Esophagus muscularis mucosa (tissue), 4 donors: ENCODE measurements at regions of chr16 and their contacts with region 1.

Region 1: DNA sequence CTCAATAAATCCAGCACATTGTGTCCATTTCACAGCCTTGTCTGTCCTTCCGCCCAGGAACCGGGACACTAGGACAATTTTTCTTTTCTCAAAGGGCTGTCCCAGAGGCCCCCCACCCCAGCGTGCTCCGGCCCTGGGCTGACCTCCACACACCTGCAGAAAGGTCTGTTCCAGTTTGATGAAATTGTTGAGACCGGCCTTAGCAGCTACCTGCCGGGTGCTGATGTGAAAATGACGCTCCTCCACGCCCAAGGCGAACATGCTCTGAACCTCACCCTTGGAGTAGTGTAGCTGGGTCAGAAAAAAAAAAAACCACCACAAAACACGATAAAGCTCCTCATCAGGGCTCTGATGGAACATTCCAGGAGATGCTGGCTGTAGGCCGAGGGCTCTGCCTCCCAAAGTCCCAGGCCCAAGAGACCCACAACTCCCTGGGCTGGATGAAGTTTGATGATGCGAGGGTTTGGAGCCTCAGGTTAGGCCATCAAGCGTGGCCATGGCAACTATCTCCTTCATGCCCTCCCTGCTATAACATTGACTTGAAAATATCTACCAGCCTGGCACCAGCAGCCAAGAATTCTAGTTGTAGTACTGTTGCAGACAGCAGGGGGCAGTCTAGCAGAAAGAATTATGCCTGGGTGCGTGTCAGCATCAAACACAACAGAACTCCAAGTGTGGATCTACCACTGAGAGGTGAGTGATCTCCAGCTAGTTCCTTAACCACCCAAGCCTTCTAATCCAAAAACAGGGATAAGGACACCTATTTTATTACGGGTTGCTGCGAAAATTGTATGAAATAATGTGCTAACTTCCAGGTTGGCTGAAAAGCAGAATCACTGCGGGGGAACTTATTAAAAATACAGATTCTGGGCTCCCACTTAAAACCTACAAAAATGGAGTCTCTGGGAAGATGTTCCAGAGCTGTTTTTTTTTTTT is 62.1 kb downstream of the RMI2 start:
- DNase-seq: no peak
- H3K4me3 ChIP-seq: no peak overlapping the region
- H3K27ac ChIP-seq: no peak overlapping the region
- H3K4me1 ChIP-seq: no peaks in the 10 kb centered on the region
- H3K27me3 ChIP-seq: no peaks in the 10 kb centered on the region
- CTCF ChIP-seq: peak; percentile 53 to 74 (median 59)
- EP300 ChIP-seq: no peak
- POLR2A ChIP-seq: no peak

Region 2: DNA sequence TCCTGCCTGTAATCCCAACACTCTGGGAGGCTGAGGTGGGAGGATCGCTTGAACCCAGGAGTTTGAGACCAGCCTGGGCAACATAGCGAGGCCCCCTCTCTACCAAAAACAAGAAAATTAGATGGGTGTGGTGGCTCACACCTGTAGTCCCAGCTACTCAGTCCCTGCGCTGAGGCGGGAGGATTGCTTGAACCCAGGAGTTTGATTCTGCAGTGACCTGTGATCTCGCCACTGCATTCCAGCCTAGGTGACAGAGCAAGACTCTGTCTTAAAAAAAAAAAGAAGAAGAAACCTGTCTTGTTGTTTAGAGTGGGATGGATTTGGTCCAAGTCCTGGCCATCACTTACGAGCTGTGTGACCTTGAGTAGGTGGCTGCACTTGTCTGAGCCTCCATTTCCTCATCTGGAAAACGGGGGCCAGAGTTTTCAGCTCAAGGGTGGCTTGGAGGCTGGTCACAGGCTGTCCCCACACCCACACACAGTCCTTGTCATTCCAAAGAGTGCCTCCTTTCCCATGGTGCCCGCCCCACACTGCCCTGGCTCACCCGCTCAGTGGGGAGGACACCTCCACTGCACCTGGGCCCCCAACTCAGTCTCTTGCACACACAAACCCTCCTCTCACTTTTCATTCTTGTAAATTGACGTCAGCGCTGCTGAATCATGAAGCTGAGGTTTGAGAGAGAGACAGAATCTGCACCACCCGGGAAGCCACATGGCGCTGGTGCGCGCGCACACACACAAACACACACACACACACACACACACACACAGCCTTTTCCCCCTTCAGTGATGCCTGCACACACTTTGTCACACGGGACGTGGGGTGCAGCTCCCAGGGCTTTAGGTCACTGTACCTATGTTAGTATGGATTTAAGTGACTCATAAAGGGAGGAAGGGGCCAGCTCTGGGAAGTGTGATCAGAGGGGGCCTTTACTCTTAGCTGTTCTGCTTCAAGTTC is 155.5 kb before region 1 on chr16:
- intact Hi-C with region 1: no loop called
- DNase-seq: no peak
- H3K4me3 ChIP-seq: no peak overlapping the region
- H3K27ac ChIP-seq: no peak overlapping the region
- H3K4me1 ChIP-seq: peaks cover 17 to 32% (median 28%) of the 10 kb centered on the region in 4 donors
- H3K27me3 ChIP-seq: peaks cover 0 to 4% (median 0%) of the 10 kb centered on the region in 4 donors
- CTCF ChIP-seq: no peak
- EP300 ChIP-seq: no peak
- POLR2A ChIP-seq: no peak

Region 3: GRCh38 chr16:11506741-11507305 is 99.5 kb after region 1 on chr16:
- intact Hi-C with region 1: loop called (anchors 10 kb)
- DNase-seq: no peak
- H3K4me3 ChIP-seq: no peak overlapping the region
- H3K27ac ChIP-seq: no peak overlapping the region
- H3K4me1 ChIP-seq: no peaks in the 10 kb centered on the region
- H3K27me3 ChIP-seq: no peaks in the 10 kb centered on the region
- CTCF ChIP-seq: no peak
- EP300 ChIP-seq: no peak
- POLR2A ChIP-seq: no peak

Region 4: GRCh38 chr16:11639925-11640899 is 232.9 kb after region 1 on chr16:
- intact Hi-C with region 1: loop called (anchors 5 kb)
- DNase-seq: no peak
- H3K4me3 ChIP-seq: peak overlapping the region in 2 of 4 donors; percentile 3 to 16
- H3K27ac ChIP-seq: peak overlapping the region; percentile 76 to 85 (median 80)
- H3K4me1 ChIP-seq: peaks cover 16 to 24% (median 23%) of the 10 kb centered on the region in 4 donors
- H3K27me3 ChIP-seq: no peaks in the 10 kb centered on the region
- CTCF ChIP-seq: no peak
- EP300 ChIP-seq: peak; percentile 74
- POLR2A ChIP-seq: peak; percentile 4

Region 5: DNA sequence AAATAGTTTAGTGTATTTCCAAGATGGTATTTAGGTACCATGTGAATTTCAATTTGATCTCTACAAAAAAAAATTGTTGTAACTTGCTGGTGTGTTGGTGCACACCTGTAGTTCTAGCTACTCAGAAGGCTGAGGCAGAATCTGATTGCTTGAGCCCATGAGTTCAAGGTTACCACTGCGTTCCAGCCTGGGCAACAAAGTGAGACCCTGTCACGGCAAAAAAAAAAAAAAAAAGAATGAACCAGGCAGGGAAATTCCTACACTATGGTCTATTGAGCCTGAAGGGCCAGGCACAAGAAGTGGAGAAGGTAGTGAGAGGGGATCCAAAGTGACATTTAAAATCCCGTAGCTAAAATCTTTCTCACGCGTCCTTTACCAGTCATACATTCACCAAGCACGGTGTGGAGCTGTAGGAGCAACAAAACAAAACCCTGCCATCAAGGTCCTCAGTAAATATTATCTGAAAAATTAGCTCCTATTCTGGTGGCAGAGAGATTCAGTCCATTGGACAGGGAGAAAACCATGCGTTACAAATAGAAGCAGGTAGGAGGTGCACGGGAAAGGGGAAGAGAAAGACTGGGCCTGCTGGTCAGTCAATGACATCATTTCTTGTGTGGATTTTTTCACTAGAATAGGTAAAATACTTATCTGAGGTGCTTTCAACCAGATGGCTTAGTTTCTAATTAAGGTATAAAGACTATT is 308.1 kb after region 1 on chr16:
- intact Hi-C with region 1: loop called (anchors 2 kb)
- DNase-seq: no peak
- H3K4me3 ChIP-seq: no peak overlapping the region
- H3K27ac ChIP-seq: no peak overlapping the region
- H3K4me1 ChIP-seq: peaks cover 9 to 41% (median 32%) of the 10 kb centered on the region in 4 donors
- H3K27me3 ChIP-seq: no peaks in the 10 kb centered on the region
- CTCF ChIP-seq: no peak
- EP300 ChIP-seq: no peak
- POLR2A ChIP-seq: no peak

Region 6: GRCh38 chr16:11806721-11807120 is 399.4 kb after region 1 on chr16:
- intact Hi-C with region 1: loop called (anchors 5 kb)
- DNase-seq: no peak
- H3K4me3 ChIP-seq: no peak overlapping the region
- H3K27ac ChIP-seq: no peak overlapping the region
- H3K4me1 ChIP-seq: no peaks in the 10 kb centered on the region
- H3K27me3 ChIP-seq: no peaks in the 10 kb centered on the region
- CTCF ChIP-seq: no peak
- EP300 ChIP-seq: no peak
- POLR2A ChIP-seq: no peak